MCF 10A (cell line): ENCODE measurements at regions of chr1 and their contacts with region 1.

Region 1: DNA sequence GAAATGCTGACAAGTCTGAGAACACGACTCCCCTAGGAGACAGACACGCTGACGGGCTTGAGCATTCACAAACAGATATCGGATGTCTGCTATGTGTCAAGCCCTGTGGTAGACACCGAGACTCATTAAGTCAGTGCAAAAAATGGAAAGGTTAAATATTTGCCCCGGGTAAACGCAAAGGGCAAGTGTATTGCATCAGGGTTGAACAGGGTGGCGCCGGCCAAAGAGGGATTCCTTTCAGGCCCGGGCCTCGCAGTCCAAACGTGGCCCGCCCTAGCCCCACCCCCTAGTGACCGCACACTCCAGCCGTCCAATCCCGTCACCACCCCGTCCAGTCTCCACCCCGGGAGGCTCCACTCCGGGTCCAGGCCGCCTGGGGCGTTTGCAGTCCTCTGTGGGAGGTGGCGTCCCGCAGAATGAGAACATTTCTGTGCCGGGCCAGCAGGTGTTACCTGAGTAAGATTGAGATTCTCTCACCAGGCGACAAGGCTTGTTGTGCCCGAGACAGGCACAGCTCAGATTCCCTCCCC is 16.3 kb upstream of the TMEM9 start:
- DNase-seq: peak; percentile 99
- H3K4me3 Mint-ChIP-seq: peak overlapping the region; percentile 73
- H3K27ac Mint-ChIP-seq: peak overlapping the region; percentile 75
- H3K4me1 Mint-ChIP-seq: peaks cover 20% of the 10 kb centered on the region
- H3K27me3 Mint-ChIP-seq: no peaks in the 10 kb centered on the region
- CTCF ChIP-seq: no peak

Region 2: GRCh38 chr1:201149400-201149799 is 21.2 kb before region 1 on chr1:
- CTCF ChIA-PET with region 1: interaction called, 25 read pairs
- POLR2A ChIA-PET with region 1: interaction called, 40 read pairs
- intact Hi-C with region 1: loop called (anchors 1 kb)
- DNase-seq: peak; percentile 80
- H3K4me3 Mint-ChIP-seq: no peak overlapping the region
- H3K27ac Mint-ChIP-seq: no peak overlapping the region
- H3K4me1 Mint-ChIP-seq: peaks cover 5% of the 10 kb centered on the region
- H3K27me3 Mint-ChIP-seq: no peaks in the 10 kb centered on the region
- CTCF ChIP-seq: peak; percentile 78

Region 3: DNA sequence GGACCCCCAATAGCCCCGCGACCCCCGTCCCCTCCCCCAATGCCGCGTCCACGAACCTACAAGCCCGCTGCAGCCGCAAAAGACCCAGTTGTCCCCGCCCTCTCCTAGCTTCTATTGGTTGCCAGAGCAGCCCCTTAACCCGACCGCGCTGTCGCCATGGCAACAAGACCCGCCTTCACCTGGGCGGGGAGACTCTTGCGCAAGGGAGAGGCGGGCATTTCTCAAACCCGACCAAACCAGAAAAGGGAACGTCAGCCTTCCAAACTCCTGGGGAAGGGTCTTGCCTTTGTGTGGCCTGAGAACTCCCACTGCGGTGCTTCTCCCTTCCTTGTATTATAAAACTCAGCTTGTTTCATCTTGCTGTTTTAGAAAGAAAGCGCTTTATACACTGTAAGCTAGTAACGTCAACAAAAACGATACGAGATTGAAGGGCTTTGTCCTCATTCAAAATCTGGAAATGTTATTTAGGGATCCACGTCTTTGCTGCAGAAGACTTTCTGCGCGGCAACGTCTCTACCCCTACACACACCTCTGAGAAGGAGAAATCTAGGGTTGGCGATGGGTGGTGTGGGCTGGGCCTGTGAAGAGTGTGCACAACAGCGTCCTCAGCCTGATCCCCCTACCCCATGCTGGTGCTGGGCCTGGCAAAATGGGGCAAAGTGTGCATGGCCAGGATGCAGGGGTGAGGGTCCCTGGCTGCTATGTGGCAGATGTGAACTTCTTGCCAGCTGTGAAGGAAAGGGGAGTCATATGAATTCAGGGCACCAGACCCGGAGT is 16.0 kb before region 1 on chr1 and contains the start of gene TMEM9:
- CTCF ChIA-PET with region 1: interaction called, 25 read pairs
- POLR2A ChIA-PET with region 1: interaction called, 40 read pairs
- intact Hi-C with region 1: loop called (anchors 1 kb)
- DNase-seq: peak; percentile 99
- H3K4me3 Mint-ChIP-seq: peak within 1 kb of the TSS; percentile 82
- H3K27ac Mint-ChIP-seq: peak within 1 kb of the TSS; percentile 14
- H3K4me1 Mint-ChIP-seq: peaks cover 5% of the 10 kb centered on the region
- H3K27me3 Mint-ChIP-seq: peaks cover 12% of the 10 kb centered on the region
- CTCF ChIP-seq: no peak
- total RNA-seq, gene TMEM9: 67.2 and 71.7 TPM in 2 replicates

Region 4: DNA sequence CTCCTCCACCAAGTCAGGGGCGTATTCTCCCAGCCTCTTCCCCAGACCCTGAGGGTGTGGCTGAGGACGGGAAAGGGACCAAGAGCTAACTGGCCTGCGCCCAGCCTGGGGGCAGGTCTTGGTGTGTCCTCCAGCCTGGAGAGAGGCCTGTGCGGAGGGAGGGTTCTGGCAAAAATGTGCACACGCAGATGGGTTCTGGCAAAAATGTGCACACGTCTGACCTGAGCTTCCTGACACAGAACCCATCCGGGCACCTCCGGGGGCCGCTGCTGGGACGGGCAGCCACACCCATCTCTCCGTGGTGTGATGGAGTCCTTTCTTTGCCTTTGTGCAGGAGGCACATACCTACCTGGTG is 89.6 kb after region 1 on chr1:
- CTCF ChIA-PET with region 1: no interaction called
- POLR2A ChIA-PET with region 1: no interaction called
- intact Hi-C with region 1: no loop called
- DNase-seq: peak; percentile 93
- H3K4me3 Mint-ChIP-seq: peak overlapping the region; percentile 38
- H3K27ac Mint-ChIP-seq: peak overlapping the region; percentile 84
- H3K4me1 Mint-ChIP-seq: peaks cover 16% of the 10 kb centered on the region
- H3K27me3 Mint-ChIP-seq: no peaks in the 10 kb centered on the region
- CTCF ChIP-seq: no peak

Region 5: DNA sequence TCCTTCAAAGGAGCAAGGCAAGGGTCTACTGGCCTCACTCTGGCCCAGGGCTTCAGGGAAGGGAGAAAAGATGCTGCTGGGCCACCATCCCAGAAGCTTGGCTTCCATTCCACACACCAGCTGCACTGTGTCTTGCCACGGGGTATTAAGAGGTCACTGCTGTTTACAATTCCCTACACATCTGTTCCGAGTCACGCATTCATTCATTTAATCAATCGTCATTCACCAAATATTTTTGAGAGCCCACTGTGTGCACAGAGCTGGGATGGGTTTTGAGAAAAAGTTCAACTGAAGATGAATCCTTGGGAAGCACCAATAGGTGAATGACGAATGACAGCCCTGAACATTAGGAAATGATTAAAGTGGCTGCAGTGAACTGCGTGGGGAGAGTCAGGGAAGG is 470.0 kb after region 1 on chr1:
- CTCF ChIA-PET with region 1: no interaction called
- POLR2A ChIA-PET with region 1: no interaction called
- intact Hi-C with region 1: no loop called
- DNase-seq: no peak
- H3K4me3 Mint-ChIP-seq: no peak overlapping the region
- H3K27ac Mint-ChIP-seq: no peak overlapping the region
- H3K4me1 Mint-ChIP-seq: no peaks in the 10 kb centered on the region
- H3K27me3 Mint-ChIP-seq: peaks cover 28% of the 10 kb centered on the region
- CTCF ChIP-seq: no peak